MCF 10A (cell line): ENCODE measurements at regions of chr10 and their contacts with region 1.

Region 1: DNA sequence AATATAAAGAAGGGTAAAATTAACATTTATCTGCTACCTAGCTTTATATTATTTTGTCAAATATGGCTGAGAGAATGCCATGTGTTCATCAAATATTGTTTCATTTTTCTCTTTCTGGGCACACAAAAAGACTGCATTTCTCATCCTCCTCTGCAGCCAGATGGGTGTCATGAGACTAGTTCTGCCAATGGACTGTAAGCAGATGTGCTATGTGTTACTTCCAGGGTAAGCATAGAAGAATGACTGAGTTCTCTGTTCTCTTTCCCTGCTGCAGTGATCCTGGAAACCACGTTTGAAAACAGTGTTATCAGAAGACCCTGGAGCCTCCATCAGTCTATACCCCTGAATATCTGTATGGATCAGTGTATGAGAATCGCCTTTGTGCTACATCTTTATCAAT is 24.1 kb upstream of the SLK start:
- DNase-seq: no peak
- H3K4me3 Mint-ChIP-seq: no peak overlapping the region
- H3K27ac Mint-ChIP-seq: peak overlapping the region; percentile 37
- H3K4me1 Mint-ChIP-seq: peaks cover 11% of the 10 kb centered on the region
- H3K27me3 Mint-ChIP-seq: no peaks in the 10 kb centered on the region
- CTCF ChIP-seq: no peak

Region 2: DNA sequence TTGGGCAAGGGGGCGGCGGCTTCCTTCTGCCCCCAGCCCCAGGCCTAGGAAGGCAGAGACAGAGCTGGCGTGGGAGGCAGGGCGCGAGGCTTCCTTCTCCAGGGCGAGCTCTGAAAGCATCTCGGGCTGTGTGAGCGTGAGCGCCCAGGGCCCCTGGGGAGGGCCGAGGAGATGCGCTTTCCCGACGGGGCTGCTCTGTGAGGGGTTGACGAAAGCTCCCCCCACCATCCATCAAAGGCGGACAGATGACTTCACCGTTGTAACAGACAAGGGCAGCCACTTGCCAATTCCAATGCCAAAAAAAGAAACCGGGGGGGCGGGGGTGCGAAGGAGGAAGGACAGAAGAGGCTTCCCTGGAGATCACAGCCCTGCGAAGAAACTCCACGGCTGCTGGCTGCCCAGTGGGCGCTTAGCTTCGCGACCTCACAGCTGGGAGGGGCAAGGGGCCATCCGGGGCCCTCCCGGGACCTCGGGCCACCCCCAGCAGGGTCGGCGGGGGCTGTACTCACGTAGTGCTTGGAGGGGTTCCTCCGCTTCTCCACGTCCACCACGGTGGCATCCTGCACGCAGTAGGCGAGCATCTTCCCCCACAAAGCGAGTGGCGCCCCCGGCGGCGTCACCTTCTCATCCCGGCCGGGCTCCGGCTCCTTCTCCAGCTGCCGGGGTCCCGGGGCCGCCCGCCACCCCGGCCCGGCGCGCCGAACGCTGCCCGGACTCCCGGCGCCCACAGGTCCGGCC is 88.0 kb before region 1 on chr10:
- CTCF ChIA-PET with region 1: no interaction called
- POLR2A ChIA-PET with region 1: no interaction called
- intact Hi-C with region 1: no loop called
- DNase-seq: peak; percentile 23
- H3K4me3 Mint-ChIP-seq: peak overlapping the region; percentile 74
- H3K27ac Mint-ChIP-seq: no peak overlapping the region
- H3K4me1 Mint-ChIP-seq: peaks cover 32% of the 10 kb centered on the region
- H3K27me3 Mint-ChIP-seq: no peaks in the 10 kb centered on the region
- CTCF ChIP-seq: peak; percentile 4

Region 3: DNA sequence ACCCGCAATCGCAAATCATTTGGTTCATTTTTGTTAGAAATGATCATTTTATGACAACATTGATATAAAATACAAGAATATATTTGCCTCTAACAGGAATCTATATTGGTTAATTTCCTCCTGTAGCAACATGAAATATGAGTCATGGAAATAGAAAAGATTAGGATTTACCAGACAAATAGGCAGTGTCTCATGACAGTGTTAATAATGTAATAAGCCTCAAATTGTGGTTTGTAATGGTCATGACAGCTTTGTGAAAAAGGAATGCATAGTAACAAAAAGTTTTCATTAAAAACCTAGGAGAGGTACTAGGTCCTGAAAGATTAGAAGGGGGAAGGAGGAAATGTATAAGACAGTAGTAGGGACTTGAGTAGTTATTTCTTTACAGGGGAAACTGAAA is 16.1 kb after region 1 on chr10:
- CTCF ChIA-PET with region 1: no interaction called
- POLR2A ChIA-PET with region 1: interaction called, 14 read pairs
- intact Hi-C with region 1: no loop called
- DNase-seq: peak; percentile 18
- H3K4me3 Mint-ChIP-seq: no peak overlapping the region
- H3K27ac Mint-ChIP-seq: no peak overlapping the region
- H3K4me1 Mint-ChIP-seq: peaks cover 14% of the 10 kb centered on the region
- H3K27me3 Mint-ChIP-seq: no peaks in the 10 kb centered on the region
- CTCF ChIP-seq: no peak